SK-N-SH (cell line): ENCODE measurements at regions of chr2 and their contacts with region 1.

Region 1: GRCh38 chr2:88059979-88060906 is 4.7 kb upstream of the KRCC1 start:
- DNase-seq: peak; percentile 71
- H3K4me3 ChIP-seq: peak overlapping the region in 1 of 2 experiments; percentile 6; a peak in 1 of 4 replicates
- H3K27ac ChIP-seq: no peak overlapping the region
- H3K4me1 ChIP-seq: peaks cover 0 to 5% of the 10 kb centered on the region in 2 experiments; a peak in 2 of 4 replicates
- H3K27me3 ChIP-seq: no peaks in the 10 kb centered on the region
- CTCF ChIP-seq: peak; percentile 84
- EP300 ChIP-seq: no peak
- RAD21 ChIP-seq: peak; percentile 93

Region 2: GRCh38 chr2:88074854-88075292 is 14.6 kb after region 1 on chr2:
- CTCF ChIA-PET with region 1: interaction called, 19 read pairs
- POLR2A ChIA-PET with region 1: no interaction called
- DNase-seq: no peak
- H3K4me3 ChIP-seq: no peak overlapping the region
- H3K27ac ChIP-seq: peak overlapping the region in 1 of 2 experiments; percentile 35; a peak in 1 of 4 replicates
- H3K4me1 ChIP-seq: peaks cover 3 to 18% of the 10 kb centered on the region in 2 experiments; a peak in 2 of 4 replicates
- H3K27me3 ChIP-seq: no peaks in the 10 kb centered on the region
- CTCF ChIP-seq: no peak
- EP300 ChIP-seq: peak; percentile 19 to 61; a peak in 2 of 4 replicates
- RAD21 ChIP-seq: no peak

Region 3: DNA sequence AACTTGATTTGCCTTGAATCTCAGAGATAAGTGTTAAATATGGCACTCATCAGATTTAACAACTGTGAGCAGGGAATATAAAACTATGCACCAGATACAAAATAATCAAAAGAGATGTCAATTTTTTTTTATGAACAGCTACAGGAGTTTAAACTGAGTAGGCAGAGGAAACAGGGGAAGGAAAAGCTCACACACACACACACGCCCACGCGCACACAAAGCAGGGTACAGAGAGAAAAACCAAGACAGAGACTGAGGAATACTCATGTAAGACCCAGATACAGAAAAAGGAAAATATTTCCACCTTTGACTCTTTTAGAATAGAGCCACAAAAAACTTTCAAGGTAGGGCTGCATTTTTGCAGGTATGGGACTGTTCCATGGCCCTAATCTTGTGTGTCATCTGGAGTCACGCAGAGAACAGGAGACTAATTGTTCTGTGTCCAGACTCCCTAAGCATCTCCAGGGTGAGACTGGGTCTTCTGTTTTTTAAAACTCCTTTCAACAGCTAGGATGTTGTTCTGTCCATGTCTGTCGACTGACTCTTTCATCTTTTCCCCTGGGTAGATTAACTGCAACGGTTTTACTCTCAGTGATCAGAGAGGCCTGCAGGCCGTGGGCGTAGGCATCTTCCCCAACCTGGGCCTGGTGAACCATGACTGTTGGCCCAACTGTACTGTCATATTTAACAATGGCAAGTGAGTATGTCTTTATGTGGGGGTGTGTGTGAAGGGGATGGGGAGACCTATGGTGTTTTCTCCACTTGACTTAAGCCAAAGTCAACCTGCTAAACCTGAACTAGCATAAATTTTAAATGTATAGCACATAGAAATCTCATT is 30.4 kb after region 1 on chr2:
- CTCF ChIA-PET with region 1: interaction called, 13 read pairs
- POLR2A ChIA-PET with region 1: no interaction called
- DNase-seq: no peak
- H3K4me3 ChIP-seq: no peak overlapping the region
- H3K27ac ChIP-seq: no peak overlapping the region
- H3K4me1 ChIP-seq: no peaks in the 10 kb centered on the region; a peak in 1 of 4 replicates
- H3K27me3 ChIP-seq: no peaks in the 10 kb centered on the region
- CTCF ChIP-seq: no peak
- EP300 ChIP-seq: no peak
- RAD21 ChIP-seq: no peak

Region 4: DNA sequence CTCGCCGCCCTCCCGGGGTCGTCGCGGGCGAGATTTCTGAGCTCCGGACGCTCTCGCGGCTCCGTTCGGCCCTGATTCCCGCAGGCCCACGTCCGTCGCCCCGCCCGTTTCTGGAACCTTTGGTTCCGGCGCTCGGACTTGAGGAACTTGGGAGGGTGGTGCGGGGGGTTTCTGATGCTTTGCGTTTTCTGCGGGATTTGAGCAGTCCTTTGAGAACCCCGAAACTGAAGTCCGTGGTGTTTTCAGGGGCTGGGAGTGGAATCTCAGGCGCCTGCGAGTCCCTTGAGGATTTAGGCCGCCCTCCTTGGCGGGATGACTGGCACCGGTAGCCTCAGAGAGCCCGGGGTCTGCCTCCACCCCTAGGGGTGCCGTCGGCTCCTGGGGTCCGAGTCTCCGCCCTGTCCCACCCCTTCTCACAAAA is 110.2 kb after region 1 on chr2:
- CTCF ChIA-PET with region 1: interaction called, 12 read pairs
- POLR2A ChIA-PET with region 1: interaction called, 3 read pairs
- DNase-seq: peak; percentile 39
- H3K4me3 ChIP-seq: peak overlapping the region in 1 of 2 experiments; percentile 27; a peak in 2 of 4 replicates
- H3K27ac ChIP-seq: no peak overlapping the region
- H3K4me1 ChIP-seq: no peaks in the 10 kb centered on the region
- H3K27me3 ChIP-seq: no peaks in the 10 kb centered on the region; the same call in 1 of the 2 replicates
- CTCF ChIP-seq: no peak
- EP300 ChIP-seq: no peak
- RAD21 ChIP-seq: no peak

Region 5: DNA sequence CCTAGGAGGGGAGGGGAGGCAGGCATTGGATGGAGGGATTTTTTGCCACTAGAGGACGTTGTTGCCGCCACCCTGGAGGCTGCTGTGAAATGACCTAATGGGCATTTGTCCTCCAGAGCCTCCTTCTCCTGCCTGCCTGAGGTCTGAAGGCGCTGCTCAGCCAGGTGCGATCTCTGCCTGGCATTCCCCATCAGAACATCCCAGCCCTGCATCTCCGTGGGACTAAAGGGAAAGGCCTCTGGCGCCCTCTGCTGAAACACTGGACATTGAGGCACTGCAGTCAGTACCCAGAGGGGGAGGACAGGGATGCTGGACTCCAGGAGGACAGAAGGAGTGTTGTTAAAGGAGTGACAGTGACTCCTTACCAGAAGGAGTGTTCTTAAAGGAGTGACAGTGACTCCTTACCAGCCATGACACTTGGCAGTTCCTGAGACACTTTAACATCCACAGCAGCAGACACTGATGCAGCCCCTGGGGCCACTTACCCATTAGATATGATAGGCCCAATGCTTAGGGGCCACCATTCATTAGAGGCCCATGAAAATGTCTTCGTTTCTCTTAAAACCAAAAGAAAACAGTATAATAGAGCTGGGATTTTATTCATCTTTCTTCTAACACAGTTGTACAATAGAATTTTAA is 126.9 kb after region 1 on chr2:
- CTCF ChIA-PET with region 1: interaction called, 33 read pairs
- POLR2A ChIA-PET with region 1: no interaction called
- DNase-seq: peak; percentile 82
- H3K4me3 ChIP-seq: peak overlapping the region in 1 of 2 experiments; percentile 43; a peak in 1 of 4 replicates
- H3K27ac ChIP-seq: no peak overlapping the region
- H3K4me1 ChIP-seq: peaks cover 0 to 7% of the 10 kb centered on the region in 2 experiments; a peak in 1 of 4 replicates
- H3K27me3 ChIP-seq: no peaks in the 10 kb centered on the region
- CTCF ChIP-seq: peak; percentile 62
- EP300 ChIP-seq: no peak
- RAD21 ChIP-seq: peak; percentile 78